ENCODE measurements at regions of chr1 and their contacts with region 1.

Region 1: GRCh38 chr1:184973272-184974055 is 844 bp downstream of the NIBAN1 start:
- DNase-seq: no peak
- H3K4me3 Mint-ChIP-seq: peak overlapping the region; percentile 90
- H3K27ac Mint-ChIP-seq: peak overlapping the region; percentile 96
- H3K4me1 Mint-ChIP-seq: peaks cover 57% of the 10 kb centered on the region
- H3K27me3 Mint-ChIP-seq: peaks cover 13% of the 10 kb centered on the region

Region 2: GRCh38 chr1:183471743-183472487 is 1501.5 kb before region 1 on chr1:
- intact Hi-C with region 1: loop called (anchors 5 kb)
- DNase-seq: peak; percentile 92
- H3K4me3 Mint-ChIP-seq: peak overlapping the region; percentile 87
- H3K27ac Mint-ChIP-seq: peak overlapping the region; percentile 99
- H3K4me1 Mint-ChIP-seq: peaks cover 24% of the 10 kb centered on the region
- H3K27me3 Mint-ChIP-seq: no peaks in the 10 kb centered on the region

Region 3: DNA sequence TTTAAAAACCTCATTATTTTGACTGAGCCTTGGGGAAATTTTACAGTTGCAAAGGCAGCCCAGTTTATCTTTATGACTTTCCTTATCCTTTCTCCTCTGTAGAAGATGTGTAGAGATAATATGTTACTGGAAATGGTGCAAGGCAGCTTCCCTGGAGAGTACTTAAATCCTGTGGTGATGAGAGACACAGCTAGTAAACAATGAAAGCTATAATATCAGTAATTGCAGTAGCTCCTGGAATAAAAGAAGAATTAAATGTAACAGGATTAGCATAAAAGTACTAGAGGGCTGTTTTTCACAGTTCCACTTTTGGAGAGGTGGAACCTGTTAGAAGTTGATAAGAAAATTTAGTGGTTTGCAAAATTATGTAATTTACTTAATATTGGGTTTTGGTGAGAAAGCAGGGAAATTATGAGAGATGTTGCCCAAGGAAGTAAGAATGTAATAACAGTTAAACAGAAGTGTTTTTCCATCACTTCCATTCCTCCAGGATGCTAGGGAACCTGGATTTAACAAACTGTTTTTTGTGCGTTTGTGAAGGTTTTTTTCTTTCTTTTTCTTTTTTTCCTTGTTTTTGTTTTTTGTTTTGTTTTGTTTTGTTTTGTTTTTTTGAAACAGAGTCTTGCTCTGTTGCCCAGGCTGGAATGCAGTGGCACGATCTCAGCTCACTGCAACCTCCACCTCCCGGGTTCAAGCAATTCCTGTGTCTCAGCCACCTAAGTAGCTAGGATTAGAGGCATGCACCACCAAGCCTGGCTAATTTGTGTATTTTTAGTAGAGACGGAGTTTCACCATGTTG is 203.1 kb before region 1 on chr1:
- intact Hi-C with region 1: no loop called
- DNase-seq: no peak
- H3K4me3 Mint-ChIP-seq: no peak overlapping the region
- H3K27ac Mint-ChIP-seq: no peak overlapping the region
- H3K4me1 Mint-ChIP-seq: no peaks in the 10 kb centered on the region
- H3K27me3 Mint-ChIP-seq: peaks cover 22% of the 10 kb centered on the region

Region 4: GRCh38 chr1:184881941-184882913 is 91.2 kb before region 1 on chr1:
- intact Hi-C with region 1: loop called (anchors 1 kb)
- DNase-seq: no peak
- H3K4me3 Mint-ChIP-seq: peak overlapping the region; percentile 1
- H3K27ac Mint-ChIP-seq: peak overlapping the region; percentile 90
- H3K4me1 Mint-ChIP-seq: peaks cover 31% of the 10 kb centered on the region
- H3K27me3 Mint-ChIP-seq: peaks cover 5% of the 10 kb centered on the region

Region 5: GRCh38 chr1:184929711-184930631 is 43.5 kb before region 1 on chr1:
- intact Hi-C with region 1: loop called (anchors 1 kb)
- DNase-seq: no peak
- H3K4me3 Mint-ChIP-seq: no peak overlapping the region
- H3K27ac Mint-ChIP-seq: no peak overlapping the region
- H3K4me1 Mint-ChIP-seq: peaks cover 9% of the 10 kb centered on the region
- H3K27me3 Mint-ChIP-seq: peaks cover 2% of the 10 kb centered on the region

Region 6: GRCh38 chr1:184987696-184988095 is 14.2 kb after region 1 on chr1:
- intact Hi-C with region 1: no loop called
- DNase-seq: no peak
- H3K4me3 Mint-ChIP-seq: no peak overlapping the region
- H3K27ac Mint-ChIP-seq: no peak overlapping the region
- H3K4me1 Mint-ChIP-seq: no peaks in the 10 kb centered on the region
- H3K27me3 Mint-ChIP-seq: peaks cover 45% of the 10 kb centered on the region

Region 7: GRCh38 chr1:185017966-185018365 is 44.5 kb after region 1 on chr1:
- intact Hi-C with region 1: no loop called
- DNase-seq: no peak
- H3K4me3 Mint-ChIP-seq: no peak overlapping the region
- H3K27ac Mint-ChIP-seq: no peak overlapping the region
- H3K4me1 Mint-ChIP-seq: no peaks in the 10 kb centered on the region
- H3K27me3 Mint-ChIP-seq: no peaks in the 10 kb centered on the region

Region 8: DNA sequence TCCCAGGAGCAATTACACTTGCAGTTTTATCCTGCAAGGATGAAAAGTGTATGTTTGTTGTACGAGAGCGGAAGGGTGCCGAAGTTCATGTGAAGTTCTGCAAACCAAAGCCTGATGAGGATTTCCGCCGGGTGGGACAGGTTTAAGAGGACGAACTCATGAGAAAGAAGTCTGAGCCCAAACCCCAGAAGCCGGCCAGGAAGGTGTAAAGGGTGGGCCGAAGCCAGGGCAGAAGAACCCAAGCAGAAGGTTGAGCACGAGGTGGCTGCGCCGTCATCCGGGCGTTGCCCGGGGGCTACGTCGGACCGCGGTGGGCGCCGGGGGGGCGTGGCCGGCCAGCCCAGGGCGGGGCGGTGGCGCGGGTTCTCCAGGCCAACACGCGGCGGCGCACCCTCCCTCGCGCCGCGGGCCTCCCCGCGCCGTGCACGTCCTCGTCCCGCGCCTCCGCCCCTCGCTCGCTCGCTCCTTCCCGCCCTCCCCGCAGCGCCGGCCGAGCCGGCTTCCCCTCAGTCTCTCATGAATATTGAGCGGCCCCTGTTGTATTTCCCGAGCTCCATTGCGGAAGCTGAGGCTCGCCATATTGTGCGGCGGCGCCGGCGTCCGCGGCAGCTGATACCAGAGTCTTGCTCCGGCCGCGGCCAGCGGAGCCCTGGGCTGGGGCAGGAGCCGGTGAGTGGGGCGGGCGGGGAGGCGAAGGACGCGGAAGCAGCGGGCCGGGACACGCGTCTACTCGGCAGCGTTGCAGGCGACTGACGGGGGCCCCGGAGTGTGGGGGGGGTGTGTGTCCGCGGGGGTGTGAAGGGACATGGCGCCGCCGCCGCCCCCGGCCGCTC is 71.7 kb after region 1 on chr1 and contains the start of gene RNF2:
- intact Hi-C with region 1: loop called (anchors 5 kb)
- DNase-seq: peak; percentile 67
- H3K4me3 Mint-ChIP-seq: peak within 1 kb of the TSS; percentile 87
- H3K27ac Mint-ChIP-seq: peak within 1 kb of the TSS; percentile 80
- H3K4me1 Mint-ChIP-seq: peaks cover 21% of the 10 kb centered on the region
- H3K27me3 Mint-ChIP-seq: peaks cover 13% of the 10 kb centered on the region
- total RNA-seq, gene RNF2: 25.7 and 30.6 TPM in 2 replicates